Common myeloid progenitor, CD34-positive (primary cell): ENCODE measurements at regions of chr7 and their contacts with region 1.

Region 1: GRCh38 chr7:151080067-151080521 is 515 bp downstream of the FASTK start:
- DNase-seq: peak in 2 of 3 donors; percentile 42 to 51
- H3K4me3 ChIP-seq: peak overlapping the region; percentile 71 to 94 (median 87)
- H3K27ac ChIP-seq: peak overlapping the region; percentile 75 to 92
- H3K4me1 ChIP-seq: peaks cover 3 to 46% (median 42%) of the 10 kb centered on the region in 4 experiments
- H3K27me3 ChIP-seq: no peaks in the 10 kb centered on the region

Region 2: DNA sequence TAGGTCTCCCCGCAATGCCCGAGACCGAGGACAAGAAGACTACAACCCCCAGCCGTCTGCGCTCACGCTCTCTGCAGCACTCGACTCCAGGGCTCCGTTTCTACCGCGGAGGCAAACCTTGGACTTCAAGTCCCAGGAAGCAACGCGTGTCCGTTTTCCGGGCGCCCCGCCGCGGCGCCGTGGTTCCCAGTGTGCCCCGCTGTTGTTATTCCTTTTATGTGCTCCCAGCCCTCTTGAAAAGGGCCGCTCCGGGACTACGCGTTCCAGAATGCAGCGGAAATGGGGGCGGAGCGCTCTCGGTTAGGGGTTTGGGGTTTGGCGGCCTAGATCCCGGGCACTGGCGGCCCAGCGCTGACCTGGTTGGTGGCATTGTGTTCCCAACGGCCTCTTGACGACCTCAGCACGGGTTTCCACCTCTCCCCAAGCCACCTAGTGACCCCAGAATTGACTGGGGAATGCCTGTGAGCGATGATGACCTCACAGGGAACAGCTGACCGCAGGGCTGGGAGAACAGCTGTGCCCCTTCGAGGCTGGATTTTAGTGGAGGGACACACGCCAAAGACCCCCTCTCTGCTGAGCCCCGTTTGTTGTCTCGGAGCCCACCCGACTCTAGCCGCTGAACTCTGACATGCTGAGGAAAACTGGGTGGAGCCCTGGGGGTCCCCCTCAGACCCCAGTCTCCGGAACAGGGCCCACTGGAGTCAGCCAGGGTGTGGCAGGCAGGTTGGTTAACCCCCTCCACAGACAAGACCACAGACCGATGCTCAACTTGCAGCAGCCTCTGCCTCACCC is 21.9 kb before region 1 on chr7:
- CTCF ChIA-PET with region 1: interaction called, 64 read pairs
- POLR2A ChIA-PET with region 1: no interaction called
- DNase-seq: peak; percentile 99 to 100 (median 99)
- H3K4me3 ChIP-seq: peak overlapping the region; percentile 68 to 98 (median 82)
- H3K27ac ChIP-seq: peak overlapping the region; percentile 50 to 90
- H3K4me1 ChIP-seq: peaks cover 5 to 47% (median 40%) of the 10 kb centered on the region in 4 experiments
- H3K27me3 ChIP-seq: no peaks in the 10 kb centered on the region

Region 3: DNA sequence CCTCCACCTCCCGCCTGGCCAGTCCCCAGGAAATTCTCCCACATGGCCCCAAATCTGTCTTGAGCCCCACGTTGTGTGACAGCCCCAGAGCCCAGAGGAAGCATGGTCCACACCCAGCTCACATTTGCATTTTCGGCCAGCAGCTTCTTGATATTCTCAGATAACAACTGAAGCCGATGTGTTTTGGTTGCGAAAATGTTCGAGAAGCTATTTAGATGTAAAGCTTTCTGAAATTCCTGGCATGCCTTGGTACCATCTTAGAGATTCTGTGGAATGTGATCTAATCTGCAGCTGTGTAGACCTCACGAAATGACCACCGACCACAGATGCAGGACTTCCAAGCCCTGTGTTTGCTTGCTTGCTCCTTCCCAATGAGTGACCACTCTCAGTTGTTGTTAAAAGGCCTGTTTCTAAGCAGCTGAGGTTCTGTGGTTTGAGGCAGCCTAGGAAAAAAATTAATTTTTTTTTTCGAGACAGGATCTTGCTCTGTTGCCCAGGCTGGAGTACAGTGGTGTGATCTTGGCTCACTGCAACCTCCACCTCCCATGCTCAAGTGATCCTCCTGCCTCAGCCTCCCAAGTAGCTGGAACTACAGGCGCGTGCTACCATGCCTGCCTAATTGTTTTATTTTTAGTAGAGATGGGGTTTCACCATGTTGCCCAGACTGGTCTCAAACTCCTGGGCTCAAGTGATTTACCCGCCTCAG is 11.9 kb before region 1 on chr7:
- CTCF ChIA-PET with region 1: interaction called, 64 read pairs
- POLR2A ChIA-PET with region 1: no interaction called
- DNase-seq: no peak
- H3K4me3 ChIP-seq: no peak overlapping the region
- H3K27ac ChIP-seq: no peak overlapping the region
- H3K4me1 ChIP-seq: no peaks in the 10 kb centered on the region
- H3K27me3 ChIP-seq: no peaks in the 10 kb centered on the region